ENCODE measurements at regions of chr3 and their contacts with region 1.

Region 1: DNA sequence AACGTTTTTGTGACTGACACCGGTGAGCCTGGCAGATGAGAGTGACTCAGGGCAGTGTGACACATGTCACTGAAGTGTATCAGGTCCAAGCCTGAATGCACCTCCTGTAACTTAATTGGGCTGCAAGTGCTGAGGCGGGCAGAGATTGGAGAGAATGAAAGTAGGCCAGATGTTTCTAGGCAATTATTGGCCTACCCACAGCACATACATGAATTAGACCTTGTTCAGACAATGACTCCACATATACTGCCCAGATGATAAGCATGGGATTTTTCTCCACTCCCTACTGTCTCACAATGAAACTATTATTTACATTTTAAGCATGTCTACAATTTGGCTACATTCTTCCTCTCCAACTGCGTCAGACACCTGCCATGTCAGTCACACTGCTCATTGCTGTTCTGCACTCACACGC is 187.3 kb upstream of the ZNF385D start:
- DNase-seq: no peak
- H3K4me3 ChIP-seq: no peak overlapping the region
- H3K27ac ChIP-seq: no peak overlapping the region
- H3K4me1 ChIP-seq: no peaks in the 10 kb centered on the region
- H3K27me3 ChIP-seq: no peaks in the 10 kb centered on the region
- CTCF ChIP-seq: no peak
- EP300 ChIP-seq: no peak
- POLR2A ChIP-seq: no peak

Region 2: DNA sequence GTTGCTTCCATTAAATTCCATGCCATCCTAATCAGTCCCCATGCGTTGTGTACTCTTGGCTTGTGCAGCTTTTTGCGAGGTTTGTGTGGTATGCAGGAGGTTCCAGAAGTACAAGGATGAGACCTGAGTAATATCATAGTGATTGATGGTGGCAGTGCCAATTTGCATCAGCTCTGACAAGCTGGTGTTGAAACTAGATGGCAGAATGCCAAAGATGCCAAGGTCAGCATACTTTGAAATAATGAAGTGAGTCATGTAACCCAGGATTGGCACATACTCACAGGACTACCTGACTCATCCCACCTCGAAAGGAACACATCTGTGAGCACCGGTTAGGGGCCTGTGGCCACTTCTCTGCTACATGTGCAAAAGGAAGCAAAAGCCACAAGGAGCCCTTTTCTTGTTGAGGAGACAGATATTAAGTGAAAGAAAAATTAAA is 1883.7 kb before region 1 on chr3:
- in situ Hi-C with region 1: no loop called
- intact Hi-C with region 1: loop called (anchors 5 kb)
- DNase-seq: peak; percentile 64
- H3K4me3 ChIP-seq: no peak overlapping the region
- H3K27ac ChIP-seq: peak overlapping the region; percentile 8 to 28 (median 12)
- H3K4me1 ChIP-seq: peaks cover 17 to 42% (median 24%) of the 10 kb centered on the region in 4 donors
- H3K27me3 ChIP-seq: no peaks in the 10 kb centered on the region
- CTCF ChIP-seq: no peak
- EP300 ChIP-seq: no peak
- POLR2A ChIP-seq: no peak